ENCODE measurements at regions of chr9 and their contacts with region 1.

Region 1: DNA sequence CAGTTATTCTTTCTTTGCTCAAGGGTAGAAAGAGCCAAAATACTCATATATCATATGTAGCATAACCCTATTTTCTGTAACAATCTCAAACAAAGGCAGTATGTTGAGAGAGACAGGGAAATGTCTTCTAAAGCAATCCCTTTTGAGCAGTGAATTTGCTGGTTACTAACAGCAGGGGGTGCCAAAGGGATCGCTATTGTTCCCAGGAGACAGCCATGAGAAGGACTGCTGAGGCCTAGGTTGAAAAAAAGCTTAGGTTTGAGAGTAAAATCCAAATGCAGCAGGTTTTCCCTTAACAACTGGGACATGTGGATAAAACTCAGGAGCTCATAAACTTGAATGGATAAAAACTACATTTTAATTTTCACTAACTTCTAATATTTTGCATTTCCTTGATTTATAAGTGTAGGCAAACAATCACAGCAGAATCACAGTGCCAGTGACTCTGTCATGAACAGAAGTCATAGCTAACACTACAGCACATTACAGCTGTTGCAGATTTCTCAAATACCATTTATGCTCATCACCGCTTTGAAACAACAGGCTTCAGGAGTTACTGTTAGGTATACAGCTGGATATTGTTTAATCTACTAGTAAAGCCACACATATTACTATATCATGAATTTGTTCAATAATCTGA is 148.4 kb downstream of the MAPKAP1 start:
- DNase-seq: peak; percentile 64
- H3K4me3 Mint-ChIP-seq: no peak overlapping the region
- H3K27ac Mint-ChIP-seq: no peak overlapping the region
- H3K4me1 Mint-ChIP-seq: peaks cover 13% of the 10 kb centered on the region
- H3K27me3 Mint-ChIP-seq: no peaks in the 10 kb centered on the region

Region 2: GRCh38 chr9:125568621-125569020 is 10.0 kb after region 1 on chr9:
- CTCF ChIA-PET with region 1: interaction called, 21 read pairs
- POLR2A ChIA-PET with region 1: no interaction called
- intact Hi-C with region 1: no loop called
- DNase-seq: no peak
- H3K4me3 Mint-ChIP-seq: no peak overlapping the region
- H3K27ac Mint-ChIP-seq: no peak overlapping the region
- H3K4me1 Mint-ChIP-seq: peaks cover 4% of the 10 kb centered on the region
- H3K27me3 Mint-ChIP-seq: no peaks in the 10 kb centered on the region

Region 3: GRCh38 chr9:125612616-125613540 is 54.3 kb after region 1 on chr9:
- CTCF ChIA-PET with region 1: interaction called, 12 read pairs
- POLR2A ChIA-PET with region 1: no interaction called
- intact Hi-C with region 1: no loop called
- DNase-seq: no peak
- H3K4me3 Mint-ChIP-seq: no peak overlapping the region
- H3K27ac Mint-ChIP-seq: no peak overlapping the region
- H3K4me1 Mint-ChIP-seq: peaks cover 40% of the 10 kb centered on the region
- H3K27me3 Mint-ChIP-seq: no peaks in the 10 kb centered on the region

Region 4: GRCh38 chr9:125655691-125656410 is 97.3 kb after region 1 on chr9:
- CTCF ChIA-PET with region 1: no interaction called
- POLR2A ChIA-PET with region 1: no interaction called
- intact Hi-C with region 1: no loop called
- DNase-seq: no peak
- H3K4me3 Mint-ChIP-seq: no peak overlapping the region
- H3K27ac Mint-ChIP-seq: no peak overlapping the region
- H3K4me1 Mint-ChIP-seq: peaks cover 19% of the 10 kb centered on the region
- H3K27me3 Mint-ChIP-seq: no peaks in the 10 kb centered on the region

Region 5: GRCh38 chr9:125706661-125707471 is 148.3 kb after region 1 on chr9 and contains the start of gene MAPKAP1:
- CTCF ChIA-PET with region 1: interaction called, 11 read pairs
- POLR2A ChIA-PET with region 1: no interaction called
- intact Hi-C with region 1: no loop called
- DNase-seq: peak; percentile 97
- H3K4me3 Mint-ChIP-seq: peak within 1 kb of the TSS; percentile 77
- H3K27ac Mint-ChIP-seq: peak within 1 kb of the TSS; percentile 77
- H3K4me1 Mint-ChIP-seq: peaks cover 37% of the 10 kb centered on the region
- H3K27me3 Mint-ChIP-seq: no peaks in the 10 kb centered on the region
- total RNA-seq, gene MAPKAP1: 55.3 to 57.9 TPM

Region 6: GRCh38 chr9:126146254-126147145 is 587.9 kb after region 1 on chr9:
- CTCF ChIA-PET with region 1: no interaction called
- POLR2A ChIA-PET with region 1: no interaction called
- intact Hi-C with region 1: loop called (anchors 5 kb)
- DNase-seq: peak; percentile 30
- H3K4me3 Mint-ChIP-seq: no peak overlapping the region
- H3K27ac Mint-ChIP-seq: no peak overlapping the region
- H3K4me1 Mint-ChIP-seq: peaks cover 2% of the 10 kb centered on the region
- H3K27me3 Mint-ChIP-seq: peaks cover 25% of the 10 kb centered on the region

Region 7: GRCh38 chr9:126204708-126205664 is 646.4 kb after region 1 on chr9:
- CTCF ChIA-PET with region 1: no interaction called
- POLR2A ChIA-PET with region 1: no interaction called
- intact Hi-C with region 1: no loop called
- DNase-seq: no peak
- H3K4me3 Mint-ChIP-seq: no peak overlapping the region
- H3K27ac Mint-ChIP-seq: no peak overlapping the region
- H3K4me1 Mint-ChIP-seq: no peaks in the 10 kb centered on the region
- H3K27me3 Mint-ChIP-seq: peaks cover 34% of the 10 kb centered on the region

Region 8: GRCh38 chr9:126228781-126229444 is 670.3 kb after region 1 on chr9:
- CTCF ChIA-PET with region 1: interaction called, 3 read pairs
- POLR2A ChIA-PET with region 1: no interaction called
- intact Hi-C with region 1: loop called (anchors 2 kb)
- DNase-seq: peak; percentile 78
- H3K4me3 Mint-ChIP-seq: no peak overlapping the region
- H3K27ac Mint-ChIP-seq: no peak overlapping the region
- H3K4me1 Mint-ChIP-seq: peaks cover 4% of the 10 kb centered on the region
- H3K27me3 Mint-ChIP-seq: peaks cover 30% of the 10 kb centered on the region

Measured in activated CD4-positive, alpha-beta memory T cell treated with anti-CD3 and anti-CD28 coated beads for 36 hours (primary cell).